ENCODE measurements at regions of chr15 and their contacts with region 1.

Region 1: GRCh38 chr15:74322181-74323076 is 45.0 kb downstream of the CYP11A1 start:
- DNase-seq: peak; percentile 85
- ATAC-seq: peak; percentile 68
- H3K4me3 Mint-ChIP-seq: no peak overlapping the region
- H3K27ac Mint-ChIP-seq: no peak overlapping the region
- H3K4me1 Mint-ChIP-seq: peaks cover 43% of the 10 kb centered on the region
- H3K27me3 Mint-ChIP-seq: no peaks in the 10 kb centered on the region; the same call in none of the 2 replicates
- CTCF ChIP-seq: peak; percentile 66

Region 2: GRCh38 chr15:73950831-73951561 is 371.4 kb before region 1 on chr15:
- CTCF ChIA-PET with region 1: interaction called, 11 read pairs
- POLR2A ChIA-PET with region 1: no interaction called
- DNase-seq: peak; percentile 91
- ATAC-seq: peak; percentile 93
- H3K4me3 Mint-ChIP-seq: no peak overlapping the region
- H3K27ac Mint-ChIP-seq: peak overlapping the region; percentile 97
- H3K4me1 Mint-ChIP-seq: peaks cover 10% of the 10 kb centered on the region
- H3K27me3 Mint-ChIP-seq: peaks cover 3% of the 10 kb centered on the region; the same call in 1 of the 2 replicates
- CTCF ChIP-seq: peak; percentile 37; the same call in 1 of the 2 replicates

Region 3: DNA sequence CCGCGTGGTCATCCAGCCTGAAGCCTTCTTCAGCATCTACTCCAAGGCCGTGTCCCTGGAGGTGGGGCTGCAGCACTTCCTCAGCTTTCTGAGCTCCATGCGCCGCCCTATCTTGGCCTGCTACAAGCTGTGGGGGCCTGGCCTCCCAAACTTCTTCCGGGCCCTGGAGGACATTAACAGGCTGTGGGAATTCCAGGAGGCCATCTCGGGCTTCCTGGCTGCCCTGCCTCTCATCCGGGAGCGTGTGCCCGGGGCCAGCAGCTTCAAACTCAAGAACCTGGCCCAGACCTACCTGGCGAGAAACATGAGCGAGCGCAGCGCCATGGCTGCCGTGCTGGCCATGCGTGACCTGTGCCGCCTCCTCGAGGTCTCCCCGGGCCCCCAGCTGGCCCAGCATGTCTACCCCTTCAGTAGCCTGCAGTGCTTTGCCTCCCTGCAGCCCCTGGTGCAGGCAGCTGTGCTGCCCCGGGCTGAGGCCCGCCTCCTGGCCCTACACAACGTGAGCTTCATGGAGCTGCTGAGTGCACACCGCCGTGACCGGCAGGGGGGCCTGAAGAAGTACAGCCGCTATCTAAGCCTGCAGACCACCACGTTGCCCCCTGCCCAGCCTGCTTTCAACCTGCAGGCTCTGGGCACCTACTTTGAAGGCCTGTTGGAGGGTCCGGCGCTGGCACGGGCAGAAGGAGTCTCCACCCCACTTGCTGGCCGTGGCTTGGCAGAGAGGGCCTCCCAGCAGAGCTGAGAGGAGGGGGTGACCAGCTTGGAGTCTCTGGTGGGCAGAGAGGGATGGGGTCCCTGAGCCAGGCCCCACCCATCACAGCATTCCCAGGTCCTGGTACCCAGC is 277.9 kb before region 1 on chr15:
- CTCF ChIA-PET with region 1: interaction called, 18 read pairs
- POLR2A ChIA-PET with region 1: no interaction called
- DNase-seq: no peak
- ATAC-seq: no peak
- H3K4me3 Mint-ChIP-seq: no peak overlapping the region
- H3K27ac Mint-ChIP-seq: no peak overlapping the region
- H3K4me1 Mint-ChIP-seq: peaks cover 21% of the 10 kb centered on the region
- H3K27me3 Mint-ChIP-seq: peaks cover 6% of the 10 kb centered on the region; the same call in 1 of the 2 replicates
- CTCF ChIP-seq: no peak

Region 4: GRCh38 chr15:74127260-74127953 is 195.0 kb before region 1 on chr15:
- CTCF ChIA-PET with region 1: interaction called, 94 read pairs
- POLR2A ChIA-PET with region 1: no interaction called
- DNase-seq: peak; percentile 98
- ATAC-seq: peak; percentile 69
- H3K4me3 Mint-ChIP-seq: peak overlapping the region; percentile 73
- H3K27ac Mint-ChIP-seq: no peak overlapping the region
- H3K4me1 Mint-ChIP-seq: peaks cover 60% of the 10 kb centered on the region
- H3K27me3 Mint-ChIP-seq: peaks cover 76% of the 10 kb centered on the region
- CTCF ChIP-seq: peak; percentile 99

Region 5: DNA sequence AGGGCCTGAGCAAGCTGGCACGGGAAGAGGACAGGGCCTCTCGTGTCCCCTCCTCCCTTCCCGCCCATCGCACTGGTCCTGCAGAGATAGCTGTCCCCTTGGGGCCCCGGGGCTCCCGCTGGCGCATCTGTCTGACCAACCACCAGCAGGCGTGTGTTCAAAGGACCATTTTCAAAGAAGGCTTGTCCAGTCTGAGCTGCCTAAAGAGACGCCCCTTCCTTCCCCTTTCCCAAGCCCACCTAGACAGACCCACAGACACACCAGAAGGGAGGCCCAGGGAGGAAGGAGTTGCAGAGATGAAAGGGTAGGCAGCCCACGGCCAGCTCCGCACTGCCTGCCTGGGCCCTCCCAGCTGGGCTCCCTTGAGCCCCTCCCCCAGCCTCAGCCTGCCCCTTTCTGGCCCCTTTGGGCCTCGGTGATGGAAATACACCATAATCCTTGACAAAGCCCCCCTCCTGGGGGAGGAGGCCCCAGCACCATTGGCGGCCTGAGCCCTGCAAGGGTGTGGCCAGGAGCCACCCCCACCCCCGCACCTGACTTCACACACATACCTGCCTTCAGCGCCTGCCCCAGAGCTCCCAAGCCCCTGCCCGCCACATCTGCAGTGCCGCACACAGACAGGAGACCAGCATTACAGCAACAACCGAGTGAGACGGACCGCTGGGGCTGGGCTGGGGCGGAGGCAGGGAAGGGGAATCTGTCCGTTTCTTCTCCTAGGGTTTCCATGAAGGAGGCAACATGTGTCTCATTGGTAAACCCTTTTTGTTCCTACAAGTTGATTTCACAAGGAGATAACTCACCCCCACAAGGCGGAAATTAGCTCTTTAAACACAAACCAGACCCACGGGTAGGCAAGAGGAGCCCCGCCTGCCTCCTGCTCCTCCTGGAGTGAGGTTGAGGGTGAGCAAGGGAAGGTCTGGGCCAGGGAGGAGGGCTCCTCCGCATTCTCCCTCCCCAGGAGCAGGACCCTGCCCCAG is 119.7 kb before region 1 on chr15 and contains the start of gene STRA6:
- CTCF ChIA-PET with region 1: interaction called, 21 read pairs
- POLR2A ChIA-PET with region 1: no interaction called
- DNase-seq: peak; percentile 93
- ATAC-seq: peak; percentile 91
- H3K4me3 Mint-ChIP-seq: peak within 1 kb of the TSS; percentile 80
- H3K27ac Mint-ChIP-seq: peak within 1 kb of the TSS; percentile 97
- H3K4me1 Mint-ChIP-seq: peaks cover 67% of the 10 kb centered on the region
- H3K27me3 Mint-ChIP-seq: peaks cover 17% of the 10 kb centered on the region
- CTCF ChIP-seq: no peak
- total RNA-seq, gene STRA6: 20.1 to 23.2 TPM (median 21.7 TPM) in 3 replicates

Region 6: DNA sequence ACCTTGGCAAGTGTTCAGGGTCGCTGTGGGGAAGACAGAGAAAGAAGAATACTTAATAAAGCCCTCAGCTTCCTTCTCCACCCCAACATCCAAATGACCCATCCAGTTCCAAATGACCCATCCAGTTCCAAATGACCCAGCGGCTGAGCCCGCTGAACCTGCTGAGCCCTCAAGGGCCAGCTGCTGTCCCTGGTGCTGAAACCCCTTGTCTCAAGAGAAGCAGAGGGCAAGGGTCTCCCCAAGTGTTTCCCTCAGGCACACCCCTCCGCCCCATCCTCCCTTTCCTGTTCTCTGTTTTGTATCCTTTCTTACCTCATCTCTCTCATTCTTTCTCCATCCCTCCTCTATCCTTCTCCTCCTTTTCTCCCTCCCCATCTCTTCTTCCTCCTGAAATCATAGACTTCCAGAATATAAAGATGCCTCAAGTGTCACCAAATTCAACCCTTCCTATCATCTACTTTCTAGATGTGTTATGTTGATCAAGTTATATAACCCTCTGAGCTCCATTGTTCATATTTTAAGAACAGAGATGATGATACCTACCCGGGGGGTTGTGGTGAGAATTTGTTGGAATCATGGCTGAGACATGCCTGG is 57.3 kb before region 1 on chr15:
- CTCF ChIA-PET with region 1: interaction called, 12 read pairs
- POLR2A ChIA-PET with region 1: no interaction called
- DNase-seq: peak; percentile 86
- ATAC-seq: peak; percentile 65
- H3K4me3 Mint-ChIP-seq: no peak overlapping the region
- H3K27ac Mint-ChIP-seq: no peak overlapping the region
- H3K4me1 Mint-ChIP-seq: peaks cover 17% of the 10 kb centered on the region
- H3K27me3 Mint-ChIP-seq: peaks cover 4% of the 10 kb centered on the region; the same call in 1 of the 2 replicates
- CTCF ChIP-seq: no peak